AG04450 (cell line): ENCODE measurements at regions of chr1 and their contacts with region 1.

Region 1: GRCh38 chr1:95043141-95043980 is 29.4 kb downstream of the ALG14 start:
- DNase-seq: peak; percentile 74
- H3K4me3 ChIP-seq: no peak overlapping the region
- H3K27ac ChIP-seq: no peak overlapping the region
- H3K27me3 ChIP-seq: no peaks in the 10 kb centered on the region
- CTCF ChIP-seq: peak; percentile 99

Region 2: DNA sequence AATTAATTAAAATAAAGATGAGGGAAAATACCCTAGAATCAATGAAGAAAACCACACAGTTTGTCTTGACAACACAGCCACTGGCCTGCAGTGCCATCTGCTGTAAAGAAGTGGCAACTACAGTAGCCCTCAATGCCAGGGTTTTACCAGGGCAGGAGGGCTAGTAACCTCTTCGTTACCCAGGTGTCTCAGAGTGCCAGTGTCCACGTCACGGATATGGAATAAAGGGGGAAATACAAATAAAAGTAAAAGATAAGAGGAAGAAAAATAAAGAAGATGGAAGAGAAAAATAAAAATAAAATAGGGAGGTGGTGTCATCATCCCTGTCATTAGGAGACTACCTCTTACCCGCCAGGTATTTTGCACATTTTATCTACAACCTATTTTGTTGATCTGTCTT is 237.4 kb before region 1 on chr1:
- CTCF ChIA-PET with region 1: interaction called, 63 read pairs
- POLR2A ChIA-PET with region 1: no interaction called
- DNase-seq: no peak
- H3K4me3 ChIP-seq: no peak overlapping the region
- H3K27ac ChIP-seq: no peak overlapping the region
- H3K27me3 ChIP-seq: no peaks in the 10 kb centered on the region
- CTCF ChIP-seq: peak; percentile 95

Region 3: GRCh38 chr1:94854458-94855306 is 188.7 kb before region 1 on chr1:
- CTCF ChIA-PET with region 1: interaction called, 266 read pairs
- POLR2A ChIA-PET with region 1: interaction called, 22 read pairs
- DNase-seq: peak; percentile 83
- H3K4me3 ChIP-seq: peak overlapping the region; percentile 58
- H3K27ac ChIP-seq: peak overlapping the region; percentile 69
- H3K27me3 ChIP-seq: no peaks in the 10 kb centered on the region
- CTCF ChIP-seq: peak; percentile 96

Region 4: GRCh38 chr1:94892604-94893254 is 150.6 kb before region 1 on chr1:
- CTCF ChIA-PET with region 1: interaction called, 25 read pairs
- POLR2A ChIA-PET with region 1: no interaction called
- DNase-seq: no peak
- H3K4me3 ChIP-seq: no peak overlapping the region
- H3K27ac ChIP-seq: no peak overlapping the region
- H3K27me3 ChIP-seq: no peaks in the 10 kb centered on the region
- CTCF ChIP-seq: no peak

Region 5: DNA sequence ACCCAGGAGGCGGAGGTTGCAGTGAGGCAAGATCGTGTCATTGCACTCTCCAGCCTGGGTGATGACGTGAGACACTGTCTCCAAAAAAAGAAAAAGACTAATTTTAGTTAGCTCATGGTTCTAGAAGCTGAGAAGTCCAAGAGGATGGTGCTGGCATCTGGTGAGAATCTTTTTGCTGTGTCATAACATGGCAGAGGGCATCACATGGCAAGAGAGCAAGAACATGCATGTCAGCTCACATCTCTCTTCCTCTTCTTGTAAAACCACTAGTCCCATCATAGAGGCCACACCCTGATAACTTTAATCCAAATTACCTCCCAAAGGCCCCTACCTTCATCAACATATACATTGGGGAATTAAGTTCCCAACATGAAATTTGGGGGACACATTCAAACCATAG is 102.6 kb before region 1 on chr1:
- CTCF ChIA-PET with region 1: interaction called, 14 read pairs
- POLR2A ChIA-PET with region 1: interaction called, 3 read pairs
- DNase-seq: no peak
- H3K4me3 ChIP-seq: no peak overlapping the region
- H3K27ac ChIP-seq: no peak overlapping the region
- H3K27me3 ChIP-seq: no peaks in the 10 kb centered on the region
- CTCF ChIP-seq: no peak

Region 6: GRCh38 chr1:95058974-95059373 is 15.6 kb after region 1 on chr1:
- CTCF ChIA-PET with region 1: interaction called, 28 read pairs
- POLR2A ChIA-PET with region 1: no interaction called
- DNase-seq: no peak
- H3K4me3 ChIP-seq: no peak overlapping the region
- H3K27ac ChIP-seq: no peak overlapping the region
- H3K27me3 ChIP-seq: no peaks in the 10 kb centered on the region
- CTCF ChIP-seq: no peak

Region 7: DNA sequence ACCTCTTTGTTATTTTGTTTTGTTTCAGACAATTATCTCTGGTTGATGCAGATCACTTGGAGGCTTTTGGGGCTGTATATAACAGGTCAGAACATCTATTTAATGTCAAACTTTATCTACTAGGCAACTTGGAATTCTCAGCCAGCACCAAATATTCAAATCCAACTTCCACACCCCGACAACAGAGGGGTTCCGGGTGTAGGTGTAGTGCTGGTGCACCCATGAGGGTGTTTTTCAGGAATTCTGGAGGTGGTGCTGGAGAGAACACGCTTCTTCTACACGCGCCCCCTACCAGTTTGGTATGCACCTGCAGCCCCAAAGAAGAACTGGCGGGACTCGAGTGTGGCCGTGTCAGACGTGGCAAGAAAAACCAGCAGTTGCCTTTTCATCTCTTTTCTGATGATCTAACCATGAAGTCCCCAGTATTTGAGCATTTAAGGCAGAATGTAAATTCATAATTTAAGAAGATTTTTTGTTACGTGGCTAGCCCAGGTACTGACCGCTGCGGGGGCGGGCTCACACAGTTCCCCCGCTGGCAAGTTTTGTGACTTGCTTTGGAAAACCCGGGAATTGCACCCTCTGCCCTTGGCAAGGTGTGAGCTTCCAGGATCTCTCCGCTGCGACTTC is 73.3 kb after region 1 on chr1:
- CTCF ChIA-PET with region 1: no interaction called
- POLR2A ChIA-PET with region 1: no interaction called
- DNase-seq: no peak
- H3K4me3 ChIP-seq: peak overlapping the region; percentile 66
- H3K27ac ChIP-seq: no peak overlapping the region
- H3K27me3 ChIP-seq: peaks cover 35% of the 10 kb centered on the region
- CTCF ChIP-seq: peak; percentile 49